Activated CD4-positive, alpha-beta T cell treated with anti-CD3 and anti-CD28 coated beads for 36 hours (primary cell): ENCODE measurements at regions of chr21 and their contacts with region 1.

Region 1: GRCh38 chr21:33641336-33642026 is at the start of gene CRYZL1:
- DNase-seq: peak; percentile 100
- ATAC-seq: peak; percentile 83
- H3K4me3 Mint-ChIP-seq: peak within 1 kb of the TSS; percentile 82
- H3K27ac Mint-ChIP-seq: peak within 1 kb of the TSS; percentile 96
- H3K4me1 Mint-ChIP-seq: peaks cover 33% of the 10 kb centered on the region
- H3K27me3 Mint-ChIP-seq: peaks cover 10% of the 10 kb centered on the region
- total RNA-seq, gene CRYZL1: 31.4 to 35.2 TPM

Region 2: DNA sequence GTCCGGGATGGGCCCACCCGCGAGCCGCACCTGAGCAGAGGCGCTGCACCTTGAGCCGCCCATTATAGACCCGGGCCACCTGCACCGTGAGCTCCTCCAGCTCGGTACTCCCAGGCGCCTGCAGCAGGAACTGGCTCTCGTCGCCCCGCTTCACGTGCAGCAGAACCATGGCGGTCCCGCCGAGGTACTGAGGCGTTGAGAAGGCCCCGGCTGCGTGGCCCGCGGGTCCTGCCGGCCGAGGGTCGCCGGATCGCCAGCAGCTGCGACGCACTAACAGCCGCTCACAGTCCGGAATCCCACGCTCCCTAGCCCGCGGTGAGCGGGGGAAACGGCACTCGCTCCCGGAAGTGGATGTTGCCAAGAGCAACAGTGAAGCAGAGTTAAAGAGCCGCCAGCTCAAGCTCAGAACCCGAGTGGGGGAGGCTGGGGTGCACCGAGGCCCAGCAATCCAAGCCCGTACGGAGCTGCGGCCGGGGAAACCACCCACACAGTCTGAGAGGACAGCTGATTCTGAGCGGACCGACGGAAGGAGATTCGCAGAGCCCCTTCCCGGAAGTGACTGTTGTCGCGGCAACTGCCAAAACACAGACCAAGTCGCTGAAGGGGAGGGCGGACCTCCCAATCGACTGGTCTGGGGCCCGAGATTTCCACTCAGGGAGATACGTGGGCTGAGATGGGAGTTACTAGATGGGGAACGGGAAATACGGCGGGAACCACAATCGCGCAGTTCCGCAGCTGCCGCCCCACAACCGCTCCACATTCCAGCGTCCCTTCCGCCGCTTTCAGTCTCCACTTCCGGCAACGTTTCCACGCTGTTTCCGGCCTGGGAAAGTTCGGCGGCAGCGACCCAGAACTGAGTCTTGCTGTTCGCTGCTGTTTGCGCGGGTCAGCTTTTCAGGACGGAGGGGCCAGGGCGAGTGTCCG is 1029.1 kb before region 1 on chr21 and contains the start of gene CFAP298:
- CTCF ChIA-PET with region 1: no interaction called
- POLR2A ChIA-PET with region 1: no interaction called
- intact Hi-C with region 1: loop called in 1 of 2 experiments (anchors 1 kb)
- DNase-seq: peak; percentile 92
- ATAC-seq: peak; percentile 90
- H3K4me3 Mint-ChIP-seq: peak within 1 kb of the TSS; percentile 96
- H3K27ac Mint-ChIP-seq: peak within 1 kb of the TSS; percentile 90
- H3K4me1 Mint-ChIP-seq: peaks cover 9% of the 10 kb centered on the region
- H3K27me3 Mint-ChIP-seq: no peaks in the 10 kb centered on the region
- total RNA-seq, gene CFAP298: 39.5 to 47.9 TPM

Region 3: GRCh38 chr21:33229784-33230544 is 411.5 kb before region 1 on chr21 and contains the start of gene IFNAR2:
- CTCF ChIA-PET with region 1: no interaction called
- POLR2A ChIA-PET with region 1: no interaction called
- intact Hi-C with region 1: loop called in 1 of 2 experiments (anchors 5 kb)
- DNase-seq: peak; percentile 85
- ATAC-seq: peak; percentile 55
- H3K4me3 Mint-ChIP-seq: peak within 1 kb of the TSS; percentile 84
- H3K27ac Mint-ChIP-seq: peak within 1 kb of the TSS; percentile 91
- H3K4me1 Mint-ChIP-seq: peaks cover 54% of the 10 kb centered on the region
- H3K27me3 Mint-ChIP-seq: no peaks in the 10 kb centered on the region
- total RNA-seq, gene IFNAR2: 26.6 to 29.8 TPM

Region 4: GRCh38 chr21:33491373-33492102 is 149.9 kb before region 1 on chr21 and contains the start of gene DNAJC28:
- CTCF ChIA-PET with region 1: no interaction called
- POLR2A ChIA-PET with region 1: no interaction called
- intact Hi-C with region 1: loop called (anchors 1 kb)
- DNase-seq: peak; percentile 95
- ATAC-seq: peak; percentile 99
- H3K4me3 Mint-ChIP-seq: peak within 1 kb of the TSS; percentile 87
- H3K27ac Mint-ChIP-seq: peak within 1 kb of the TSS; percentile 91
- H3K4me1 Mint-ChIP-seq: peaks cover 9% of the 10 kb centered on the region
- H3K27me3 Mint-ChIP-seq: no peaks in the 10 kb centered on the region
- total RNA-seq, gene DNAJC28: 0.37 to 0.43 TPM

Region 5: GRCh38 chr21:33734291-33734690 is 92.8 kb after region 1 on chr21:
- CTCF ChIA-PET with region 1: no interaction called
- POLR2A ChIA-PET with region 1: no interaction called
- intact Hi-C with region 1: no loop called
- DNase-seq: no peak
- ATAC-seq: no peak
- H3K4me3 Mint-ChIP-seq: no peak overlapping the region
- H3K27ac Mint-ChIP-seq: no peak overlapping the region
- H3K4me1 Mint-ChIP-seq: no peaks in the 10 kb centered on the region
- H3K27me3 Mint-ChIP-seq: no peaks in the 10 kb centered on the region

Region 6: DNA sequence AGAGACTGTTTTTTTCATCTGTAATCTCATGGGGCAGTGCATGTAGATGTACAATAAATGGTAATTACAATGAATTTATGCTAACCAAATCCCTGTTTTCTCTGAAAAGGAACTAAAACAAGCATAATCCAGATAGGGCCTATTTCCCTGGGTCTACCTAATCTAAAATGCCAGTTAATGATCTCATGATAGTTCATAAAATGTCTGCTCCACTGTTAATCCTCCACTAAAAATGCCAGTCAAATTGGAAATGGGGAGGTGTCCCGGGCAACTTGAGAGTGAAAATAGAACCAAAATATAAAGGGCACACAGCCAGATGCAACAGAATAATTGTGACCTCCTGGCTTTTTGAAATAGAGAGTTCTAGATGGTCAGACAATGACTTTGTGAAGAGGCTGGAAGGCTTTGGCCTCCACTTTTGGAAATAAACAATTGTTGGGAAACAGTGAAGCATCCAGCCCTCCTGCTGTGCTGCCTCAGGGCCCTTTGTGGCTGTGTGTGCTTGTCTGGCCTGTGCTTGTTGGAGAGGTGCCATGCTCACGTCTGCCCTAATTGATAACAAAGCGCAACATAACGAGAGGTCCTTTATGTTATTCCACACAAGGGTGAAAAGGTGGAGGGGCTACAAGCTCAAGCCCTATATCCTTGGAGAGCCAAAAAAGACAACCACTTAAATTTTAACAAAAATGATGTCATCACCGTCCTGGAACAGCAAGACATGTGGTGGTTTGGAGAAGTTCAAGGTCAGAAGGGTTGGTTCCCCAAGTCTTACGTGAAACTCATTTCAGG is 176.4 kb after region 1 on chr21:
- CTCF ChIA-PET with region 1: no interaction called
- POLR2A ChIA-PET with region 1: no interaction called
- intact Hi-C with region 1: no loop called
- DNase-seq: no peak
- ATAC-seq: no peak
- H3K4me3 Mint-ChIP-seq: no peak overlapping the region
- H3K27ac Mint-ChIP-seq: no peak overlapping the region
- H3K4me1 Mint-ChIP-seq: no peaks in the 10 kb centered on the region
- H3K27me3 Mint-ChIP-seq: no peaks in the 10 kb centered on the region

Region 7: GRCh38 chr21:33894736-33895288 is 253.3 kb after region 1 on chr21:
- CTCF ChIA-PET with region 1: no interaction called
- POLR2A ChIA-PET with region 1: no interaction called
- intact Hi-C with region 1: loop called (anchors 1 to 10 kb)
- DNase-seq: peak; percentile 87
- ATAC-seq: peak; percentile 99
- H3K4me3 Mint-ChIP-seq: peak overlapping the region; percentile 41
- H3K27ac Mint-ChIP-seq: peak overlapping the region; percentile 64
- H3K4me1 Mint-ChIP-seq: peaks cover 14% of the 10 kb centered on the region
- H3K27me3 Mint-ChIP-seq: peaks cover 6% of the 10 kb centered on the region

Region 8: DNA sequence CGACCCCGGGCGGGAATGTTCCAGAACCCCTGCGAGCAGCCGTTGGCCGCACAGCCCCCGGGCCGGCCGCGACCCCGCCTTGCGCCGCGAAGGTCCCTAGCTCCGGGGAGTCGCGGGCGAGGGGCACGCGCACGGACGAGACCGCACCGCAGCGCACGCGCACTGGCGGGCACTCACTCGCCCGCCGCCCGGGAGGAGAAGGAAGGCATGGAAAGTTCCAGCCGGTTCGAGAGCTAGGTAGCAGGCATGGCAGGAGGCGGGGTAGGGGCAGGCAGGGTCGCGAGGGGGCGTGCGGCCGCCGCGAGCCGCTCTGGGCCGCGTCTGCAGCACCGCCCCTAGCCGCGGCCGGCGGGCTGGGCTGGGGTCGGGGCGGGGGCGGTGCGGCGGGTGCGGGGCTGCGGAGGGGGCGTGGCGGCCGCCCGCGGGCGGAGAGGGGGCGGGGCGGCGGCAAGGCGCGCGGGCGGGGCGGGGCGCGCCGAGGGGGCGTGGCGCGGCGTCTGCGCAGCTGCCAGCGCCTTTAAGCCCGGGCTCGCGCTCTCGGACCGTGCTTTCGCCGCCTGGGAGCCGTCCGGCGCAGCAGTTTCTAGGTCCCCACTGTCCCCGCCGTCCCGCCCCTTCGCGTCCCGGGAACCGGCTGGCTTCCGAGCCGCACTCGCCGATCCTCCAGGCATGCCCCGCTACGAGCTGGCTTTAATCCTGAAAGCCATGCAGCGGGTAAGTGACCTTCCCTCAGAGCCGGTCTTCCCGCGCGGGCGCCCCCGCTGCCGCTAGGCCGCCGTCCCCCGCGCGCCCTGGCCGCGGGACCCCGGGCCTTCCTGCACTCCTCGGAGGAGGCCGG is 431.8 kb after region 1 on chr21 and contains the starts of genes MRPS6 and SLC5A3:
- CTCF ChIA-PET with region 1: no interaction called
- POLR2A ChIA-PET with region 1: no interaction called
- intact Hi-C with region 1: loop called in 1 of 2 experiments (anchors 2 kb)
- DNase-seq: peak; percentile 81
- ATAC-seq: peak; percentile 66
- H3K4me3 Mint-ChIP-seq: peak within 1 kb of the TSS; percentile 96
- H3K27ac Mint-ChIP-seq: peak within 1 kb of the TSS; percentile 92
- H3K4me1 Mint-ChIP-seq: peaks cover 38% of the 10 kb centered on the region
- H3K27me3 Mint-ChIP-seq: no peaks in the 10 kb centered on the region
- total RNA-seq, gene MRPS6: 102 to 117 TPM
- total RNA-seq, gene SLC5A3: 18.2 to 22.9 TPM